CD8-positive, alpha-beta T cell (primary cell): ENCODE measurements at regions of chr18 and their contacts with region 1.

Region 1: GRCh38 chr18:74652392-74652988 is 54.8 kb downstream of the ZNF407 start:
- DNase-seq: peak in 2 of 9 experiments; percentile 48 to 59
- ATAC-seq: no peak
- H3K4me3 ChIP-seq: no peak overlapping the region
- H3K4me3 Mint-ChIP-seq: no peak overlapping the region
- H3K27ac ChIP-seq: no peak overlapping the region
- H3K27ac Mint-ChIP-seq: no peak overlapping the region
- H3K4me1 ChIP-seq: no peaks in the 10 kb centered on the region
- H3K4me1 Mint-ChIP-seq: no peaks in the 10 kb centered on the region
- H3K27me3 ChIP-seq: no peaks in the 10 kb centered on the region
- H3K27me3 Mint-ChIP-seq: no peaks in the 10 kb centered on the region
- CTCF ChIP-seq: peak; percentile 82

Region 2: GRCh38 chr18:74597662-74598349 is 54.7 kb before region 1 on chr18 and contains the start of gene ZNF407:
- CTCF ChIA-PET with region 1: no interaction called
- POLR2A ChIA-PET with region 1: no interaction called
- intact Hi-C with region 1: no loop called
- DNase-seq: peak; percentile 76 to 94 (median 86)
- ATAC-seq: peak; percentile 76
- H3K4me3 ChIP-seq: peak within 1 kb of the TSS; percentile 94 to 98
- H3K4me3 Mint-ChIP-seq: peak within 1 kb of the TSS; percentile 95
- H3K27ac ChIP-seq: peak within 1 kb of the TSS; percentile 94 to 98
- H3K27ac Mint-ChIP-seq: peak within 1 kb of the TSS; percentile 99
- H3K4me1 ChIP-seq: peaks cover 25% of the 10 kb centered on the region
- H3K4me1 Mint-ChIP-seq: peaks cover 50% of the 10 kb centered on the region
- H3K27me3 ChIP-seq: no peaks in the 10 kb centered on the region
- H3K27me3 Mint-ChIP-seq: no peaks in the 10 kb centered on the region
- CTCF ChIP-seq: no peak
- total RNA-seq, gene ZNF407: 18.4 to 18.5 TPM

Region 3: GRCh38 chr18:75088622-75089211 is 436.2 kb after region 1 on chr18:
- CTCF ChIA-PET with region 1: no interaction called
- POLR2A ChIA-PET with region 1: no interaction called
- intact Hi-C with region 1: loop called in 1 of 2 experiments (anchors 10 kb)
- DNase-seq: peak in 1 of 9 experiments; percentile 39
- ATAC-seq: no peak
- H3K4me3 ChIP-seq: no peak overlapping the region
- H3K4me3 Mint-ChIP-seq: no peak overlapping the region
- H3K27ac ChIP-seq: no peak overlapping the region
- H3K27ac Mint-ChIP-seq: no peak overlapping the region
- H3K4me1 ChIP-seq: no peaks in the 10 kb centered on the region
- H3K4me1 Mint-ChIP-seq: no peaks in the 10 kb centered on the region
- H3K27me3 ChIP-seq: no peaks in the 10 kb centered on the region
- H3K27me3 Mint-ChIP-seq: no peaks in the 10 kb centered on the region
- CTCF ChIP-seq: no peak

Region 4: GRCh38 chr18:75309564-75309963 is 657.1 kb after region 1 on chr18:
- CTCF ChIA-PET with region 1: no interaction called
- POLR2A ChIA-PET with region 1: no interaction called
- intact Hi-C with region 1: loop called in 1 of 2 experiments (anchors 10 kb)
- DNase-seq: no peak
- ATAC-seq: no peak
- H3K4me3 ChIP-seq: no peak overlapping the region
- H3K4me3 Mint-ChIP-seq: no peak overlapping the region
- H3K27ac ChIP-seq: no peak overlapping the region
- H3K27ac Mint-ChIP-seq: no peak overlapping the region
- H3K4me1 ChIP-seq: no peaks in the 10 kb centered on the region
- H3K4me1 Mint-ChIP-seq: no peaks in the 10 kb centered on the region
- H3K27me3 ChIP-seq: no peaks in the 10 kb centered on the region
- H3K27me3 Mint-ChIP-seq: peaks cover 7% of the 10 kb centered on the region
- CTCF ChIP-seq: no peak

Region 5: GRCh38 chr18:75364512-75365253 is 712.2 kb after region 1 on chr18:
- CTCF ChIA-PET with region 1: no interaction called
- POLR2A ChIA-PET with region 1: no interaction called
- intact Hi-C with region 1: loop called (anchors 1 to 2 kb)
- DNase-seq: no peak
- ATAC-seq: no peak
- H3K4me3 ChIP-seq: no peak overlapping the region
- H3K4me3 Mint-ChIP-seq: no peak overlapping the region
- H3K27ac ChIP-seq: no peak overlapping the region
- H3K27ac Mint-ChIP-seq: no peak overlapping the region
- H3K4me1 ChIP-seq: no peaks in the 10 kb centered on the region
- H3K4me1 Mint-ChIP-seq: no peaks in the 10 kb centered on the region
- H3K27me3 ChIP-seq: peaks cover 0 to 4% of the 10 kb centered on the region in 2 experiments
- H3K27me3 Mint-ChIP-seq: peaks cover 2% of the 10 kb centered on the region
- CTCF ChIP-seq: no peak

Region 6: DNA sequence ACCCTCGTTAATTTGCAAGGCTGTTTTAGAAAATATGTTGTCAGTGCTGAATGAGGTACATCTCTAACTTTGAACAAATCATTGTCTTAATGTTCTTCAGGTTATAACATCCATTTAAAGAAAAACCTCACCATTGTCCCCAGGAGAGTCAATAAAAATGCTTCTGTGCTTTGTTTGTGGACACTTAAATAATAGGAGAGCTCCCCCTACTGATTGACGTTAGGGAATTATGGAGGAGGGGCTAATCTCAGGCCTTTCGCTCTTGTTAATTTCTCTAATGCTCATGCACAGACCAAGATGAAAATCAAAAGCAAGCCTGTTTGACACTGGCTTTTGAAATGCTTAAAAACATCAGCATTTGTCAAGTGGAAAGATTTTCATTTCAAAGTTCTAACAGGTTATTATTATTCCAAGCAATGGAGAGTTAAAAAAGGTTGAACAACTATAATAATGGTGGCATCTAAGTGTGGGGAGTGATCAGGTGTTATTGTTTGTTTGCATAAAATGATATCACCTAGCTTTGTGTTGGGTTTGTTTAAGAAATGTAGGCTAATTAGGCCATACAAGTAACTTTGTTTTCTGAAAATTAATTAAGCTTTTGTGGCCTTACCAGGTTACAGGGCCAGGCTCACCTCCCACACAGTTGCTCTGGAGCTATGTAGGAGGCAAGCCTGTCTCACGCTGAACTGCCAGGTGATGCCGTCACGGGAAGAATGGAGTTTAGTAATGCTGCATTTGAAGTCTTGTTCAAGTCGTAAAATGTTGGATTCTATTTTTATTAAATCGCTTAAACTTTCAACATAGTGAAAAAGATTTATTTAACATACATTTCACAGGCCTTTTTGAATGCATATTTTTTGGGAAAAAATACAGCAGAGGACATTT is 826.7 kb after region 1 on chr18:
- CTCF ChIA-PET with region 1: interaction called, 6 read pairs
- POLR2A ChIA-PET with region 1: no interaction called
- intact Hi-C with region 1: loop called (anchors 1 kb)
- DNase-seq: peak in 2 of 9 experiments; percentile 54 to 65
- ATAC-seq: no peak
- H3K4me3 ChIP-seq: no peak overlapping the region
- H3K4me3 Mint-ChIP-seq: no peak overlapping the region
- H3K27ac ChIP-seq: no peak overlapping the region
- H3K27ac Mint-ChIP-seq: no peak overlapping the region
- H3K4me1 ChIP-seq: no peaks in the 10 kb centered on the region
- H3K4me1 Mint-ChIP-seq: peaks cover 2% of the 10 kb centered on the region
- H3K27me3 ChIP-seq: no peaks in the 10 kb centered on the region
- H3K27me3 Mint-ChIP-seq: peaks cover 4% of the 10 kb centered on the region
- CTCF ChIP-seq: peak; percentile 41

Region 7: DNA sequence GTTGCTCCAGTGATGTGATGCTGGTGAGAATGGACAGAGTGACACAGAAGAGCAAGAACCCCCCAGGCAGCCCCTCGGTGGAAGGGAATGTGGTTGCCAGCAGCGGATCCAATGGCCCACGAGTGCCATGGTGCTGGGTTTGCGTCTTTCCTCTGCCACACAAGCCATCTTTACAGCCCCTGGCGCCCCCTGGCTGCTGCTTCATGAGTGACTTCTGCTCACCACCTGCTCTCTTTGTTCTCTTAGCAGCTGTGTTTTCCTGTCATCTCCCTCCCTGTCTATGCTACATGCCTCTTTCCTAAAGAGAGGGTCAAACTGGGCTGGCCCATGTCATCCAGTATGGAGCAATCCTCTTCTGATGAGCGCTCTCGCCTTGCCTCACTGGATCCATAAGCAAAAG is 1075.0 kb after region 1 on chr18:
- CTCF ChIA-PET with region 1: no interaction called
- POLR2A ChIA-PET with region 1: no interaction called
- intact Hi-C with region 1: loop called in 1 of 2 experiments (anchors 2 kb)
- DNase-seq: peak in 4 of 9 experiments; percentile 12 to 23 (median 18)
- ATAC-seq: no peak
- H3K4me3 ChIP-seq: no peak overlapping the region
- H3K4me3 Mint-ChIP-seq: no peak overlapping the region
- H3K27ac ChIP-seq: no peak overlapping the region
- H3K27ac Mint-ChIP-seq: no peak overlapping the region
- H3K4me1 ChIP-seq: no peaks in the 10 kb centered on the region
- H3K4me1 Mint-ChIP-seq: no peaks in the 10 kb centered on the region
- H3K27me3 ChIP-seq: no peaks in the 10 kb centered on the region
- H3K27me3 Mint-ChIP-seq: peaks cover 34% of the 10 kb centered on the region
- CTCF ChIP-seq: no peak

Region 8: GRCh38 chr18:76349067-76349715 is 1696.7 kb after region 1 on chr18:
- CTCF ChIA-PET with region 1: interaction called, 4 read pairs
- POLR2A ChIA-PET with region 1: no interaction called
- intact Hi-C with region 1: loop called (anchors 1 kb)
- DNase-seq: peak in 8 of 9 experiments; percentile 40 to 74 (median 60)
- ATAC-seq: peak; percentile 49
- H3K4me3 ChIP-seq: no peak overlapping the region
- H3K4me3 Mint-ChIP-seq: no peak overlapping the region
- H3K27ac ChIP-seq: no peak overlapping the region
- H3K27ac Mint-ChIP-seq: no peak overlapping the region
- H3K4me1 ChIP-seq: no peaks in the 10 kb centered on the region
- H3K4me1 Mint-ChIP-seq: peaks cover 4% of the 10 kb centered on the region
- H3K27me3 ChIP-seq: no peaks in the 10 kb centered on the region
- H3K27me3 Mint-ChIP-seq: peaks cover 7% of the 10 kb centered on the region
- CTCF ChIP-seq: peak; percentile 77